ENCODE measurements at regions of chr16 and their contacts with region 1.

Region 1: DNA sequence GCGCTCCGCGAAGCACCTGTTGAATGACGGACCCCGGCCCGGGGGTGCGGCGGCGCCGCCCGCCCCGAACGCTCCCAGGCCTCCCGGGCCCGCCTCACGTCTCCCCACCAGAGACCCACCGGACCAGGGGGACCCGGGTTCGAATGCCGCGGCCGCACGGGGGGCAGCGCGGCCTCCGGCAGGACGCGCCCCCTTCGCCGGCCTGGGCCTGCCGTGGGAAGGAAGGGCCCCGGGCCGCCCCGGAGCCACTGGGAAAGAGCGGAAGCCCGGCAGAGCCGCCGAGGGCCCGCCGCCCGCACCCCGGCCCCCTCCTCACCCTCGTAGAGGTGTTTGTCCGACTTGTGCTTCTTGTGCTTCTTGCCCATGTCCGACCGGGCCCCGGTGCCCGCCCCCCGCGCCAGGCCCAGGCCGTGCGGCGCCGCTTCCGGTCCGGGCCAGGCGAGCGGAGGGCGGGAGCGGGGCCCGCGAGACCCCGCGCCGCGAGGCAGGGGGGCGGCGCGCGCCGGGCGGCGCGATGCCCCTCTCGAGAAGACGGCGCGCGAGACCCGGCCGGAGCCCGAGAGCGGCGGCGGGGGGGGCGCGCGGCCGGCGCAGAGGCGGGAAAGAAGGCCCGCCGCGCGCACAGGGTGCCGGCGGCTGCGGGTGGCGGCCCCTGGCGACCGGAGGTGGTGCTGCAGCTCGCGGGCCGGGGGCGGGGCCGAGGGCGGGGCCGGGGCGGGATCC is at the start of gene BRD7:
- DNase-seq: peak; percentile 38
- H3K4me3 ChIP-seq: peak within 1 kb of the TSS; percentile 94
- H3K27ac ChIP-seq: peak within 1 kb of the TSS; percentile 2 to 53
- H3K4me1 ChIP-seq: no peaks in the 10 kb centered on the region
- H3K27me3 ChIP-seq: no peaks in the 10 kb centered on the region
- CTCF ChIP-seq: peak; percentile 19 to 75 (median 50)
- POLR2A ChIP-seq: no peak
- total RNA-seq, gene BRD7: 38.7 to 66.0 TPM

Region 2: GRCh38 chr16:50548125-50548908 is 179.7 kb after region 1 on chr16 and contains the start of gene NKD1:
- intact Hi-C with region 1: loop called (anchors 10 kb)
- DNase-seq: peak; percentile 68
- H3K4me3 ChIP-seq: peak within 1 kb of the TSS; percentile 63 to 77
- H3K27ac ChIP-seq: peak within 1 kb of the TSS; percentile 41 to 72
- H3K4me1 ChIP-seq: no peaks in the 10 kb centered on the region
- H3K27me3 ChIP-seq: no peaks in the 10 kb centered on the region
- CTCF ChIP-seq: peak in 1 of 4 experiments; percentile 2
- POLR2A ChIP-seq: no peak
- total RNA-seq, gene NKD1: 7.0 to 13.8 TPM

Region 3: DNA sequence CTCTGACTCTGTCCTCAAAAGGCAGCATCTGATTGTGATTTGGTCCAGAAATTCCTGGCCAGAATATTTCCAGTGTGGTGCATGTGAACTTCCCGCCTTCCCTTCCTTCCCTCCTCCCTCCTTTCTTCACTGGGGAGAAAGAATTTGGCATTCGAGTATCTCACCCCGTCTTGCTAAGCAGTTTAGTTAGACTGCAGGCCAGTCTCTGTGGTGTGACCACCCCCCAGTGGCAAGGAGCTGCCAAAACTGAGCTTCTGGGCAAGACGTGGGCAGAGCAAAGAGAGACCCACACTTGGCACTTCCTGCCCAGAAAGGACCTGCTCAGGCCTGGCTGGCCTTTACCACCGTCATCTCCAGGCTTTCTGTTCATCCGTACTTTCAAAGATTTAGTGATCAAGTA is 276.2 kb after region 1 on chr16:
- intact Hi-C with region 1: loop called (anchors 5 kb)
- DNase-seq: no peak
- H3K4me3 ChIP-seq: no peak overlapping the region
- H3K27ac ChIP-seq: no peak overlapping the region
- H3K4me1 ChIP-seq: no peaks in the 10 kb centered on the region
- H3K27me3 ChIP-seq: no peaks in the 10 kb centered on the region
- CTCF ChIP-seq: peak in 2 of 4 experiments; percentile 30 to 51
- POLR2A ChIP-seq: no peak

Region 4: DNA sequence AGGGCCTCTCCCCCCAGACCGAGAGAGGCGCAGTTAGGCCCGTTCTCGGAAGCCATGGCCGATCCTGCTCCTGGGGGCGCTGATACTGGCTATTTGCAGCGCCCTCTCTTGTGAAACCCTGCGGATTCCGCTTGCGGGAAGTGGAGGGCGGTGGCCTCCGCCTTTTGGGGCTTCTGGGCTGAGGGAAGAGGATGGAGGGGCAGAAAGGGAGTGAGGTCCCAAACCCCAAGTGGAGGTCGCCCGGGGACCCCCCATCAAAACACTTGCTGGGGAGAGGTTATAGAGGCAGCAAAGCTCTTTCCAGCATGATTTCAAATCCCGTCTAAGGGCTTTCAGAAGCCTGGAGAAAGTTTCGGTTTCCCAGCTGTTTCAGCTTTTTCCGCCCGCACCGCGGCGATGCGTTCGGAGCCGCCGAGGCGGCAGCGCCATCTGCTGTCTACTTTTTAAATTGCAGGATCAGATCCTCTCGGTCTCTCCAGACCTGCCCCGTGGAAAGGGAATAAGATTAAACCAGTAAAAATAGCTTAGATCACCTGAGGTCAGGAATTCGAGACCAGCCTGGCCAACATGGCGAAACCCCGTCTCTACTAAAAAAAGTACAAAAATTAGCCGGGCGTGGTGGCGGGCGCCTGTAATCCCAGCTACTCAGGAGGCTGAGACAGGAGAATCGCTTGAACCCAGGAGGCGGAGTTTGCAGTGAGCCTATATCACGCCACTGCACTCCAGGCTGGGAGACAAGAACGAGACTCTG is 296.7 kb after region 1 on chr16:
- intact Hi-C with region 1: loop called (anchors 1 kb)
- DNase-seq: peak; percentile 66
- H3K4me3 ChIP-seq: peak overlapping the region; percentile 21
- H3K27ac ChIP-seq: no peak overlapping the region
- H3K4me1 ChIP-seq: no peaks in the 10 kb centered on the region
- H3K27me3 ChIP-seq: no peaks in the 10 kb centered on the region
- CTCF ChIP-seq: peak; percentile 87 to 93 (median 88)
- POLR2A ChIP-seq: no peak

Region 5: DNA sequence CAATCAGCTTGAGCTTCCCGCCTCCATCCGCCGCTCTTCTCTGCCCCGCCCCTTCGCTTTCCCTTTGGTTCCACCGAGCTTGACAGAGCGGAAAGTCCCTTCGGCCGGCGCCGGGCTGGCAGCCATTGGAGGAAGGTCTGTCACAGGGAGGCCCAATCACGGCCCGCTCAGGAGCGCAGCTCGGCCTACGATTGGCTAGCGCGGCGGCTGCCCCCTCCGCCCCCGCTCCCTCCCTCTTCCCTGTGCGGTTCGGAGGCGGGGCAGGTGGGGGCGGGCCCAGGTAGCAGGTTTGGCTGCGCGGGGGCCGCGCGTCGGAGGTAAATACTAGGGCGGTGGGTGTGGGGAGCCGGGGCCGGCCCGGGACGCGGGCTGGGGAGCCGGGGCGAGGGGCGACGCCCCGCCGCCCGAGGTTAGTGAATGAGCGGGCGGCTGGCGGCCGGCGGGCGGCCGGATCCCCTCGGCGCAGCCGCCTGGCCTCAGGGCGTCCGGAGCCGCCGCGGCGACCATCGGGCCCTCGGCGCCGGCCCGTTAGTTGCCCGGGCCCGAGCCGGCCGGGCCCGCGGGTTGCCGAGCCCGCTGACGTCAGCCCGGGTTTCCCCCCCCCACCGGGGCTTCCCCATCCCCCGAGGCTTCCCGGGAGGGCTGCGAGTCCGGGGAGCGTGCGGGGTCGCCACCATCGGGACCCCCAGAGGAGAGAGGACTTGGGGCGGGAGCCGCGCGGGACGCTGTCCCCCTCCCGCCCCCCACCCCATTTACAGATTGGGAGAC is 373.4 kb after region 1 on chr16 and contains the start of gene CYLD:
- intact Hi-C with region 1: loop called (anchors 10 kb)
- DNase-seq: peak; percentile 100
- H3K4me3 ChIP-seq: peak within 1 kb of the TSS; percentile 86 to 96
- H3K27ac ChIP-seq: peak within 1 kb of the TSS; percentile 86 to 88
- H3K4me1 ChIP-seq: no peaks in the 10 kb centered on the region
- H3K27me3 ChIP-seq: no peaks in the 10 kb centered on the region
- CTCF ChIP-seq: no peak
- POLR2A ChIP-seq: peak; percentile 78
- total RNA-seq, gene CYLD: 28.1 to 30.2 TPM